Sciatic nerve (tissue), 2 donors: ENCODE measurements at regions of chr1 and their contacts with region 1.

Region 1: DNA sequence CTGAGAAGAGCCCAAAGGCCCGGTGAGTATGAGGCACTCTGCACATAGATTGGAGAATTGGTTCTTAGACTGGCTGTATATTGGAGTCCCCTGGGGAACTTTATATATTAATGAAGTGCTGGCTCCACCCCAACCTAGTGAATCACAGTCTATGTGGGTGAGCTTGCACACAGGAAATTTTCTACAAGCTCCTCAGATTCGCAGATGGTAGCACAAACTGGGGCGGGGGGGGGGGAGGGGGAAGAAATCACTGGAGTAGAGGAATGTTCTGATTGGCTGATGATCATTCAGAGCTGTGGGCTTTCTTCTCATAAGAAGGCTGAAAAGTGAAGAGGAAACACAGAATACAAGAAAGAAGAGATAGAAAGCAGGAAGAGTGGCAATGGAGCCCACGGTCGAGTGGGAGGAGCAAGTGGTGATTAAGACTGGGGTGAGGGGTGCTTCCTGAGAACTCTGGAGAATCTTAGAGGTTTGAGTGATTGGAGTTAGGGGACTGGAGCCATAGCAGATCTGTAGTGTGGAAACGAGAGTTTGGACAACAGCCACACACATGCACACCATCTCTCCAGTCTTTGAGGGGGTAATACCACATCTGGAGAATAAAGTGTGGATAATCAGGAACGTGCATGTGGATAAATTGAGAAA is 465.9 kb upstream of the DAB1 start:
- DNase-seq: no peak
- ATAC-seq: no peak

Region 2: GRCh38 chr1:57468641-57469523 is 420.9 kb before region 1 on chr1:
- intact Hi-C with region 1: no loop called
- DNase-seq: no peak
- ATAC-seq: no peak

Region 3: GRCh38 chr1:57741521-57741920 is 148.3 kb before region 1 on chr1:
- intact Hi-C with region 1: loop called (anchors 10 kb)
- DNase-seq: no peak
- ATAC-seq: no peak